Caco-2 (cell line): ENCODE measurements at regions of chr3 and their contacts with region 1.

Region 1: DNA sequence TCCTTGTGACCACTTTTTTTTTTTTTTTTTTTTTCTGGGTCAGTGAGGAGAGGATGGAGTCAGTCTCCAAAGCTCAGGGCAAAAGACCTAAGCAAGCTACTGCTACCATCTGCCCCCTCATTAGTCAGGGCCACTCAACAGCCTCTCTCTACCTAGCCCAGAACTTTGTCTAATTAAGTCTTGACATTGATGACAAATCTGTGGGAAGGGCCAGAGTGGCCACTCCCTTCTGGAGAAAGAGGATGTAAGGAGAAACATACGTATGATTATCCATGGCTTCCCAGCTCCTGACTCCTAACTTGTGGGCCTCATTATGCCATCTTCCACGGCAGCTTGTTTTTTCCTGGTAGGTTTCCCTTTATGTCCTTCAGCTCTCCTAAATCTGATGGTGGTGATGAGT is 37.9 kb downstream of the NR1I2 start:
- DNase-seq: no peak
- H3K4me3 ChIP-seq: no peak overlapping the region
- H3K4me3 Mint-ChIP-seq: no peak overlapping the region
- H3K27ac Mint-ChIP-seq: no peak overlapping the region
- H3K4me1 ChIP-seq: no peaks in the 10 kb centered on the region
- H3K4me1 Mint-ChIP-seq: no peaks in the 10 kb centered on the region
- H3K27me3 ChIP-seq: no peaks in the 10 kb centered on the region
- H3K27me3 Mint-ChIP-seq: no peaks in the 10 kb centered on the region
- CTCF ChIP-seq: no peak

Region 2: GRCh38 chr3:119794971-119795612 is 24.7 kb before region 1 on chr3:
- CTCF ChIA-PET with region 1: no interaction called
- POLR2A ChIA-PET with region 1: no interaction called
- intact Hi-C with region 1: loop called (anchors 1 kb)
- DNase-seq: peak; percentile 91 to 97
- H3K4me3 ChIP-seq: no peak overlapping the region
- H3K4me3 Mint-ChIP-seq: peak overlapping the region; percentile 59
- H3K27ac Mint-ChIP-seq: peak overlapping the region; percentile 88
- H3K4me1 ChIP-seq: peaks cover 31% of the 10 kb centered on the region
- H3K4me1 Mint-ChIP-seq: peaks cover 25% of the 10 kb centered on the region
- H3K27me3 ChIP-seq: no peaks in the 10 kb centered on the region
- H3K27me3 Mint-ChIP-seq: no peaks in the 10 kb centered on the region
- CTCF ChIP-seq: no peak

Region 3: DNA sequence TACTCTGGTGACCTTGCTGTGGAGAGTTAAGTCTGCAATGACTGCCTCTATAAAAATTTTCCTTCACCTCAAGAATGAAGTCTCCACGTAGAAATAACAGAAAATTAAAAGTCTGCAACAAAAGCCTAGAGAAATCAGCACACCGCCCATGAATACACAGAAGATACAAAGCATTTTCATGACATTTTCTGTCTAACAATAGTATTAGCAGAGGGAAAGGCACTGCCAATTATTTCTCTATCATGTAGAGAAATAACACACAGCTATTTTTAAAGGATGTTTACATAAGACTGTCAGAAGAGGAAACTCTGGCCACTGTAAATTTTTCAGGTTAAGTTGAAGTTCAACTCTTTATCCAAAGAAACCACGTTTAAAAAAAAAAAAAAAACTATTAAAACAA is 193.7 kb after region 1 on chr3:
- CTCF ChIA-PET with region 1: no interaction called
- POLR2A ChIA-PET with region 1: no interaction called
- intact Hi-C with region 1: no loop called
- DNase-seq: no peak
- H3K4me3 ChIP-seq: no peak overlapping the region
- H3K4me3 Mint-ChIP-seq: no peak overlapping the region
- H3K27ac Mint-ChIP-seq: no peak overlapping the region
- H3K4me1 ChIP-seq: no peaks in the 10 kb centered on the region
- H3K4me1 Mint-ChIP-seq: peaks cover 8% of the 10 kb centered on the region
- H3K27me3 ChIP-seq: no peaks in the 10 kb centered on the region
- H3K27me3 Mint-ChIP-seq: no peaks in the 10 kb centered on the region
- CTCF ChIP-seq: no peak